Psoas muscle (tissue), 8 donors: ENCODE measurements at regions of chr6 and their contacts with region 1.

Region 1: GRCh38 chr6:150891888-150892485 is 26.5 kb downstream of the MTHFD1L start:
- DNase-seq: peak; percentile 51 to 73
- ATAC-seq: peak; percentile 79 to 91 (median 84)
- H3K4me3 ChIP-seq: no peak overlapping the region
- H3K27ac ChIP-seq: no peak overlapping the region
- H3K4me1 ChIP-seq: peaks cover 4% of the 10 kb centered on the region
- H3K27me3 ChIP-seq: peaks cover 0 to 2% (median 0%) of the 10 kb centered on the region in 3 donors
- CTCF ChIP-seq: peak; percentile 86

Region 2: GRCh38 chr6:150683320-150683719 is 208.7 kb before region 1 on chr6:
- intact Hi-C with region 1: no loop called
- DNase-seq: peak; percentile 29 to 70
- ATAC-seq: peak; percentile 47 to 72 (median 72)
- H3K4me3 ChIP-seq: peak overlapping the region; percentile 58
- H3K27ac ChIP-seq: peak overlapping the region; percentile 77
- H3K4me1 ChIP-seq: no peaks in the 10 kb centered on the region
- H3K27me3 ChIP-seq: no peaks in the 10 kb centered on the region
- CTCF ChIP-seq: no peak

Region 3: DNA sequence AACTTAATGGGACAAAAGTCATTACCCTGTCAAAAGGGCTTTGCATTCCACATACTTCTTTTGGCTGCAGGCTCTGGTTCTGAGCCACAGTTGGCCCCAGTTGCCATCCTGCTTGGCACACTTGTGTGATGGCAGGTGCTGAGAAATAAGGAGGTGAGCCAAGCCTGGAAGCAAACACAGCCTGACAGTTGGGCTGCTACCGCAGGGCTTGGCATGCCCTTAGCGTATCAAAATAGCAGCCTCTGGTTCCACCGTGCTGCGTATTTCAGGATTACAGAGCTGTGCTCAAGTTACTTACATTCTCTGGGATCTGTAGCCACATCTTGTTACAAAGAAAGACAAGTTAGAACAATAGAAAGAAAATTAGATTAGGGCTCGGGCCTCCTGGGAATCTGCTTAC is 15.4 kb before region 1 on chr6:
- intact Hi-C with region 1: no loop called
- DNase-seq: peak; percentile 55 to 77
- ATAC-seq: peak; percentile 99 to 100 (median 99)
- H3K4me3 ChIP-seq: no peak overlapping the region
- H3K27ac ChIP-seq: no peak overlapping the region
- H3K4me1 ChIP-seq: peaks cover 10% of the 10 kb centered on the region
- H3K27me3 ChIP-seq: no peaks in the 10 kb centered on the region
- CTCF ChIP-seq: peak; percentile 19

Region 4: GRCh38 chr6:151004415-151005024 is 112.5 kb after region 1 on chr6:
- intact Hi-C with region 1: loop called in 1 of 2 experiments (anchors 5 kb)
- DNase-seq: no peak
- ATAC-seq: peak in 2 of 4 donors; percentile 32 to 67
- H3K4me3 ChIP-seq: no peak overlapping the region
- H3K27ac ChIP-seq: peak overlapping the region; percentile 67
- H3K4me1 ChIP-seq: no peaks in the 10 kb centered on the region
- H3K27me3 ChIP-seq: no peaks in the 10 kb centered on the region
- CTCF ChIP-seq: no peak

Region 5: DNA sequence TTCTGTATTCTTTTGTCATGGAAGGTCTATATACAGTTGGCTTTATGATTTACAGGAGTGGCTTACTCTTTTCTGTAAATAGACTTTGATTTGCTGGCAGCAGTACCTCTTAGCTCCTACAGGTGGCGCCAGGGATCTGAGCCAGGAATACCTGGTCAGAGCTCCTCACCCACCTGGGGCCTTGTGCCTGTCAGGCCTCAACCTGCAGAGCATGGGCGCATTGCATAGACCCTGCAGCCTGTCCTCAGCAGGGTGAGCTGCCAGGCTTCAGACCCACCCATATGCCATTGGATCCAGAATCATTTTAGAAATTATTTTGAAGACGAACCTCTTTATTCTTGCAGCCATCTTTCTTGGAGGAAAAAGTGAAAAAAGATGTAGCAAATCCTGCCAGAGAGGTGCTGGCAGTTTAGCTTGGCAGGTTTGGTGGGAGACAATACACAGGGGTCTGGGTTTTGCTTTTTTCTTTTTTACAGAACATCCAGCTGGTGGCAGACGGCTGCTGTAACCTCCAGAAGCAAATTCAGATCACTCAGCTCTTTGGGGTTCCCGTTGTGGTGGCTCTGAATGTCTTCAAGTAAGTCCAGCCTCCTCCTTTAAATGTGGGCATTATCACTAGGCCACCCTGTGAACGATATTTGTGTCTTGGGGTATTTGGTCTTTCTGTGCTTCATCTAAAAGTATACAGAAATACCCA is 122.6 kb after region 1 on chr6:
- intact Hi-C with region 1: loop called (anchors 5 kb)
- DNase-seq: peak; percentile 42 to 74
- ATAC-seq: peak; percentile 57 to 72 (median 62)
- H3K4me3 ChIP-seq: no peak overlapping the region
- H3K27ac ChIP-seq: no peak overlapping the region
- H3K4me1 ChIP-seq: peaks cover 3% of the 10 kb centered on the region
- H3K27me3 ChIP-seq: no peaks in the 10 kb centered on the region
- CTCF ChIP-seq: peak; percentile 90

Region 6: DNA sequence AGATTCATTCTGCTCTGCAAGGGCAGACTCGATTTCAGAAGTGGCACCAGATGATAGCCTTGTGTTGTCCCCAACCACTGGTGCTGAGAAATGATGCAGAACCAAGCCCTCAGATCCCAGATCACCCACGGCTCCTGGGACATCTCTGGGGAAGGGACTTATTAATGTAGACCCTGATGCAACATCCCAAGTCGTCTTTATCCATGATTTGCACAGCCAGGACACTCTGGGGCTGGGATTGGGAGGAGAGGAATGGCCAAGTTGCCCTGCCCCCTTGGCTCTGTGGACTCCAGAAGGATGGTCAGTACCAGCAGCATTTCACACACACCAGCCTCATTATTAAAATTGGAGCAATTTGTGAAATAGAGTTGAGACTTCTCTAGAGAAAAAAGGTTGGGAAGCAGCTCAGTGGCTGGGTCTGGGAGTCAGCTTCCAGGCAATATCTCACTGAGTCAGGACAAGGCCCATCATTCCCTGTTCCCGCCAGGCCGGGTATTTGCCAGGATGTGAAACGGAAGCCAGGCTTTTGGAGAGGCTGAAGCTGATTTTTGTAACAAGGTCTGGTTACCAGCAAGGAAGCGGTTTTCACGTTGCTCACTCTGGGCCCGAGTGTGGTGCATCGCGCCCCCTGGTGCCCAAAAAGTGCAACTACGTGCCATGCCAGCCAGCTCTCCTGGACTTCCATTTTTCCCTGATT is 432.0 kb after region 1 on chr6:
- intact Hi-C with region 1: loop called (anchors 1 to 2 kb)
- DNase-seq: peak; percentile 84 to 90
- ATAC-seq: peak; percentile 84 to 93 (median 88)
- H3K4me3 ChIP-seq: peak overlapping the region; percentile 15
- H3K27ac ChIP-seq: peak overlapping the region; percentile 38
- H3K4me1 ChIP-seq: peaks cover 12% of the 10 kb centered on the region
- H3K27me3 ChIP-seq: peaks cover 0 to 28% (median 0%) of the 10 kb centered on the region in 3 donors
- CTCF ChIP-seq: peak; percentile 97